Naive thymus-derived CD4-positive, alpha-beta T cell (primary cell): ENCODE measurements at regions of chr18 and their contacts with region 1.

Region 1: DNA sequence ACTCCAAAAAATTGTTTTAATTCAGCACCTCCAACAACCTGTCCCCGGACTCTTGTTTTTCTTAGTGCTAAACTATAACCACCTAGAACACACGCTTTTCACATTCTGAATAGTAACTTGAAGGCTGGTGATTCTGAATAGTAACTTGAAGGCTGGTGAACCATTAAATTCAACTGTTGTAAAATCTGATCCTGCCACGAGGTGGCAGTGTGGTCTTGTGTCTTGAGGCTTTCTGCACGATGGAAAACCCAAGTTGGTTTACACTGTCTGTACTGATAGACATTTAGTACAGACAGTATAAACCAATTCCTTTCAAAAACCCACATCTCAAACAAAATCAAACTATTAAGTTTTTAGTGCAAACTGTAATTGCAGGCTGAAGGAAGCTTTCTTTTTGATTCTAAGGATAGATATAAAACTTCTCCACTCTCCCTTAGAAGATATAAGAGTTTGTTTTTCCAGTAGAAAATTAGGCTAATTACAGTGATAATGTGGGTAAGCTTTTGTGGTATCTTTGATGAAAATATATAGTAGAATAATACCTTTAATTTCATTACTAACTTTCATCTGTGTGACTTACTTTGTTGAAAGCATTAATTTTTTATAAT is 57.6 kb downstream of the VAPA start:
- DNase-seq: peak; percentile 36 to 76 (median 62)
- ATAC-seq: peak; percentile 84
- H3K4me3 ChIP-seq: no peak overlapping the region
- H3K4me3 Mint-ChIP-seq: no peak overlapping the region
- H3K27ac ChIP-seq: no peak overlapping the region
- H3K27ac Mint-ChIP-seq: no peak overlapping the region
- H3K4me1 ChIP-seq: no peaks in the 10 kb centered on the region
- H3K4me1 Mint-ChIP-seq: peaks cover 4 to 28% (median 22%) of the 10 kb centered on the region in 7 donors
- H3K27me3 ChIP-seq: peaks cover 0 to 4% of the 10 kb centered on the region in 2 donors
- H3K27me3 Mint-ChIP-seq: peaks cover 34 to 39% (median 36%) of the 10 kb centered on the region in 5 donors

Region 2: DNA sequence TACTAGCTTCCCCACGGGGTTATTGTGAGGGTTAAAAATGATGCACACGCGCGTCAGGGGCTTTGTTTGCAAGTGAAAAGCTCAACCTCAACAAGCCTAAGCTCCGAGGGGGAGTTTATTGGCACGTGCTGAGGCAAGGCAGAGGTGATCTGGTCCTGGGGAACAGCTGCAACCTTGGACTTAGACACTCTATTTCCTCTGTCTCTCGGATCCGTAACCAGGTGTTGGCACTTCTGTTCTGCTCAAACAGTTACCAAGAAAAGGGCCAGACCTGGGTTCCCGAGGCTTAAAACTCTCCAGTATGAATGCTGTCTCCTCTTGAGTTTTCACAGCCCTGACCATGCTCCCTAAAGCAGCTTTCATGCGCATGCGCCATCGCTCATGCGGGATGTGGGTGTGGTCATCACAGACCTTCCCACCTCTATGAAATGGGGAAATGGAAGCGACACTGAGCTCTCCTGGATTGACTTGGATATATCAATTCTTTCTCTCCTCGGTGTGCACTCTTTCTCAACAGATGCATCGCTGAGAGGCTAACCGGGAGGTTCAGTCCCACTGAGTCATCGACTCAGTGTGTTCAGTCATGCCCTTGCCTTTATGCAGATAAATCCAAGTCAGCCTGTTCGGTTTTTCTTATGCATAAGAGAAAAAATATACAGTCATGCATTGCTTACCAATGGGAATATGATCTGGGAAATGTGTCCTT is 283.2 kb before region 1 on chr18:
- CTCF ChIA-PET with region 1: no interaction called
- POLR2A ChIA-PET with region 1: no interaction called
- intact Hi-C with region 1: no loop called
- DNase-seq: no peak
- ATAC-seq: no peak
- H3K4me3 ChIP-seq: no peak overlapping the region
- H3K4me3 Mint-ChIP-seq: no peak overlapping the region
- H3K27ac ChIP-seq: no peak overlapping the region
- H3K27ac Mint-ChIP-seq: no peak overlapping the region
- H3K4me1 ChIP-seq: no peaks in the 10 kb centered on the region
- H3K4me1 Mint-ChIP-seq: peaks cover 0 to 12% (median 7%) of the 10 kb centered on the region in 7 donors
- H3K27me3 ChIP-seq: no peaks in the 10 kb centered on the region
- H3K27me3 Mint-ChIP-seq: peaks cover 0 to 21% (median 4%) of the 10 kb centered on the region in 5 donors

Region 3: GRCh38 chr18:9831036-9831737 is 140.2 kb before region 1 on chr18:
- CTCF ChIA-PET with region 1: no interaction called
- POLR2A ChIA-PET with region 1: no interaction called
- intact Hi-C with region 1: no loop called
- DNase-seq: no peak
- ATAC-seq: no peak
- H3K4me3 ChIP-seq: no peak overlapping the region
- H3K4me3 Mint-ChIP-seq: no peak overlapping the region
- H3K27ac ChIP-seq: no peak overlapping the region
- H3K27ac Mint-ChIP-seq: no peak overlapping the region
- H3K4me1 ChIP-seq: no peaks in the 10 kb centered on the region
- H3K4me1 Mint-ChIP-seq: peaks cover 0 to 4% (median 0%) of the 10 kb centered on the region in 7 donors
- H3K27me3 ChIP-seq: no peaks in the 10 kb centered on the region
- H3K27me3 Mint-ChIP-seq: peaks cover 5 to 24% (median 14%) of the 10 kb centered on the region in 5 donors

Region 4: DNA sequence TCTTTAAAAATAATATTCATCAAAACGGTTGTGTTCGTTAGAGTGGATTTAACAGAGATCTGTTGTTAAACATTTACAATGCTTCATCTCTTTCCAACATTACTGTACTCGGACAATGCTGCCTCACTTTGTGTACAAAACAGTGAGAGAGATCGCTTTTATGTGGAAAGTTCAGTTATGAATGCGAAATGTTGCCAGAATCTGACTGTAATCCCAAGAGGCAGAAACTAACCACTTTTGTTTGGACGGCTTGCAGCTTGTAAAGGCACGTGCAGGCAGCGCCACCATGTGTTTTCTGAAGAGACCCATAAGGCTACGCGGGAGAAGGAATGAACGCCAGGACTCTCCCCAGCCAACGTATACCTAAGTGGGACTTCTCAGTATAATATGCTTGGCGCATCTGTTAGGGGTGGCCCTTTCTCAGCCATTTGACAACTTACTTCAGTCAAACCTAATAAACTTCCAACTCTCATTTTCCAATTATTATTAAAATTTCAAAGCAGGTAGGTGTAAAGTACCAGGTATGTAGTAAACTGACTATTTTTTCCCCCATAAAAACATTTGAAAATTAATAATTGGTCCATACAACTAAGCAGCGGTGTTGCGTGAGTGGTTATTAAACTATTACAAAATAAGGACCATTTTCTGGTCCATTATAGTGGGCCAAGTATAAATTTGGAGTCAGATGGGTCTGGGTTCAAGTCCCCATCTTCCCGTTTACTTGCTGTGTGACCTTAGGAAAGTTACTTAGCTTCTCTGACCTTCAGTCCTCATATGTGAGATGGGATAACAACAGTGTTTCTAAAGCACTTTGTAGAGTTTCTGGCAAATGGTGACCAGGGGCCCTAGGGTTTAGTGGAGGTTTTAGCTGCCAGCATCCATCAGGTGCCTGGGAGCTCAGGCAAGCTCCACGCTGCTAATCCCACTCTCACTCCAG is 548.9 kb after region 1 on chr18:
- CTCF ChIA-PET with region 1: interaction called, 25 read pairs
- POLR2A ChIA-PET with region 1: no interaction called
- intact Hi-C with region 1: loop called (anchors 1 kb)
- DNase-seq: peak; percentile 28 to 59 (median 47)
- ATAC-seq: peak; percentile 91
- H3K4me3 ChIP-seq: no peak overlapping the region
- H3K4me3 Mint-ChIP-seq: peak overlapping the region in 1 of 10 donors; percentile 16
- H3K27ac ChIP-seq: no peak overlapping the region
- H3K27ac Mint-ChIP-seq: no peak overlapping the region
- H3K4me1 ChIP-seq: peaks cover 0 to 2% of the 10 kb centered on the region in 2 donors
- H3K4me1 Mint-ChIP-seq: peaks cover 10 to 19% (median 14%) of the 10 kb centered on the region in 7 donors
- H3K27me3 ChIP-seq: peaks cover 0 to 3% of the 10 kb centered on the region in 2 donors
- H3K27me3 Mint-ChIP-seq: peaks cover 24 to 45% (median 28%) of the 10 kb centered on the region in 5 donors

Region 5: DNA sequence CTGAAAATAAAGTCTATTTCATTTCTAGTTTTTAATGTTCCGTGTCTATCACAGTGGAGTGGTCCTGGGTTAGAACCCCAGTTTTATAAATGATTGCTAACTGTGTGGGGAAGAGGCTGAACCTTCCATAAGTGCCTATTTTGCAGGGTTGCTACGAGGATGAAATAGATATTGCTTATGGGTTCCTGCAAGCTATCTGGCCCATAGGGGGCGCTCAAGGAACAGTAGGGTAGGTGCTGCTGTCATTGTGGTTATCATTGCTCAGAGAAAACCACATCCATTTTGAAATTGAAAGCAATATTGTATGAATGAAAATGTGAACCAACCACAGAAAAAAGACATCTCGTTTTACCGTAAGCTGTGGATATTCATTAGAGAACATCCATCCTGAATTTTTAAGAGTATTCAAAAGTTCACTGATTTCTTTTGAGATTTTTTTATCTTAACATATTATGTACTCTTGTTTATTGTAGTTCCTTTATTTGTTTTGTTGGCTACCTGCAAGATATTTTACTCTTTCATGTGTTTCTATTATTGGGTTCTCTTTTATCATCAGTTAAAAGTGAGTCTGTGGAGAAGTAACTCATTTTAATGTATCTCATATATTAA is 816.0 kb after region 1 on chr18:
- CTCF ChIA-PET with region 1: no interaction called
- POLR2A ChIA-PET with region 1: no interaction called
- intact Hi-C with region 1: loop called in 1 of 2 experiments (anchors 5 kb)
- DNase-seq: peak; percentile 54 to 85 (median 75)
- ATAC-seq: peak; percentile 96
- H3K4me3 ChIP-seq: no peak overlapping the region
- H3K4me3 Mint-ChIP-seq: peak overlapping the region in 4 of 10 donors; percentile 7 to 33 (median 14)
- H3K27ac ChIP-seq: no peak overlapping the region
- H3K27ac Mint-ChIP-seq: peak overlapping the region in 2 of 9 donors; percentile 25 to 64
- H3K4me1 ChIP-seq: no peaks in the 10 kb centered on the region
- H3K4me1 Mint-ChIP-seq: peaks cover 0 to 9% (median 5%) of the 10 kb centered on the region in 7 donors
- H3K27me3 ChIP-seq: no peaks in the 10 kb centered on the region
- H3K27me3 Mint-ChIP-seq: peaks cover 3 to 65% (median 27%) of the 10 kb centered on the region in 5 donors

Region 6: DNA sequence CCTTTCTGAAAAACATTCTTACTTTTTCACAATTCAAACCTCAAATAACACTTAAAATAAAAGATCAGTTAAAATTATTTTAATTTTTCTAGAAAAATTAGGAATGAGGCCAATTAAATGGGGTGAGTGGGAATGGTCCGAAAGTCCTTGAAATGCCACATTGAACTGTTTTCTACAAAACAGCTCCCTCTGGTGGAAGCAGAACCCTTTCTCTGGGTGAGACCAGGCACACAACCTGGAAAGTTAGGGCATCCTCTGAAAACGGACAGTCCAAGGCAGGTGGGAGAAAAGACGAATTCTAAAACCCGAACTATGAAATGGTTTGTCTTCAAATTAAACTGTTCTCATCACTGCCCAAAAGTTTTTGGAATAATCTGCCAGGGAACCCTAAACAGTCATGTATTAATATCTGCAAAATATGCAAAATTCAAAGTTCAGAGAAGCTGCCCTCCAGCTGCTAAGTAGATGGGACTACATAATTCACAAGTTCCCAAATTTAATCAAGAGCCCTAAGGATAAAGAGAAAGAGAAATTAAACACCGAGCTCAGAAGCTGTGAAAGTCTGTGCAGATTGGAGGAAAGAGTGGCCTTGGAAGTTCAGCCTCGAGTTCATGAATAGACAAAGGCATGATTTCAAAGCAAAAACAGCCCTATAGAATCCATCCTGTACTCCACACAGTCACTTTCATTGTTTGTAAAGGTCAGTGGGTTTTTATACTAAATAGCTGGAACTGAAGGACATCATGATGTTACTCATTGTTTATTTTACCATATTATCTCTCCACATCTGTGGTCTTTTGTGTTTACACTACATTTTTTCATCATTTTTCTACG is 1069.6 kb after region 1 on chr18:
- CTCF ChIA-PET with region 1: no interaction called
- POLR2A ChIA-PET with region 1: no interaction called
- intact Hi-C with region 1: loop called in 1 of 2 experiments (anchors 1 kb)
- DNase-seq: peak in 2 of 9 donors; percentile 5 to 8
- ATAC-seq: no peak
- H3K4me3 ChIP-seq: no peak overlapping the region
- H3K4me3 Mint-ChIP-seq: no peak overlapping the region
- H3K27ac ChIP-seq: no peak overlapping the region
- H3K27ac Mint-ChIP-seq: no peak overlapping the region
- H3K4me1 ChIP-seq: no peaks in the 10 kb centered on the region
- H3K4me1 Mint-ChIP-seq: no peaks in the 10 kb centered on the region
- H3K27me3 ChIP-seq: no peaks in the 10 kb centered on the region
- H3K27me3 Mint-ChIP-seq: peaks cover 5 to 15% (median 10%) of the 10 kb centered on the region in 5 donors

Region 7: DNA sequence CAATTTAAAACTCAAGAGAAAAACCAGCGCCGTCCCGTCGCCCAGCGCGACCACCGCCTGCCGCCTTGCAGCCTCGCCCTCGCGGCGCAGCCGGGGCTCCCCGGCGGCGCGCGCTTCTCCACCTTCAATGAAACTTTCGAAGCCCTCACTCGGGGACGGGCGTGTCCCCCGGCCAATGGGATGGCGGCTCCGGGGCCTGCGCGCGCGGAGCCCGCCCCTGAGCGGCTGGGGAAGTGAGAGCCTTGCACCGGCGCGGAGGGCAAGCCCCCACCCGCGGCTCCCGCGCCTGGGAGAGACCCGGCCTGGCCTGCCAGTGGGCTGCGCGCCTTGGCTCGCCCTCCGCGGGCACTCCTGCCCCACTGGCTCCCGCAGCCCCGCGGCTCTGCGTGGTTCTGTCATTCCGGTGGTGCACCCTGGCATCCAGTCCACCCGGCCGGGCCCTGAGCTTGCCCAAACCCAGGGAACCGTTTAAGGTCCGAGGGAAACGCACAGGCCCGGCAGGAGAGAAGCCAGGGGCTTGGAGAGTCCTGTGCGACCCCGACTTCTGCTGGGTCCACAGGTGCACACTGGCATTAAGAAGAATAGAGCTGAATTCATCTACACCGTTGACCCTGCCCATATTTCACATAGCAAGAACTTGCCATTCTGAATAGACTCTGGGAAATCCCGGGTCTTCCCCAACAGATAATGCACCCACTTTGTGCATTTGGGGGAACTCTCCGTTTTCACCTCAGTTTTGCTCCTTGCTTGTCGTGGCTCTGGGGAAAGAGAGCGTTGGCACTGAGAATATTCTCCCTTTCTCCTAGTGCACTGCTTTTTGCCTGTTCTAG is 1178.2 kb after region 1 on chr18 and contains the start of gene PIEZO2:
- CTCF ChIA-PET with region 1: no interaction called
- POLR2A ChIA-PET with region 1: no interaction called
- intact Hi-C with region 1: loop called in 1 of 2 experiments (anchors 5 kb)
- DNase-seq: no peak
- ATAC-seq: peak; percentile 63
- H3K4me3 ChIP-seq: no peak within 1 kb of the TSS
- H3K4me3 Mint-ChIP-seq: peak within 1 kb of the TSS in 2 of 10 donors; percentile 15 to 36
- H3K27ac ChIP-seq: no peak within 1 kb of the TSS
- H3K27ac Mint-ChIP-seq: no peak within 1 kb of the TSS
- H3K4me1 ChIP-seq: no peaks in the 10 kb centered on the region
- H3K4me1 Mint-ChIP-seq: peaks cover 0 to 9% (median 5%) of the 10 kb centered on the region in 7 donors
- H3K27me3 ChIP-seq: no peaks in the 10 kb centered on the region
- H3K27me3 Mint-ChIP-seq: peaks cover 32 to 54% (median 42%) of the 10 kb centered on the region in 5 donors
- total RNA-seq, gene PIEZO2: not detected

Region 8: DNA sequence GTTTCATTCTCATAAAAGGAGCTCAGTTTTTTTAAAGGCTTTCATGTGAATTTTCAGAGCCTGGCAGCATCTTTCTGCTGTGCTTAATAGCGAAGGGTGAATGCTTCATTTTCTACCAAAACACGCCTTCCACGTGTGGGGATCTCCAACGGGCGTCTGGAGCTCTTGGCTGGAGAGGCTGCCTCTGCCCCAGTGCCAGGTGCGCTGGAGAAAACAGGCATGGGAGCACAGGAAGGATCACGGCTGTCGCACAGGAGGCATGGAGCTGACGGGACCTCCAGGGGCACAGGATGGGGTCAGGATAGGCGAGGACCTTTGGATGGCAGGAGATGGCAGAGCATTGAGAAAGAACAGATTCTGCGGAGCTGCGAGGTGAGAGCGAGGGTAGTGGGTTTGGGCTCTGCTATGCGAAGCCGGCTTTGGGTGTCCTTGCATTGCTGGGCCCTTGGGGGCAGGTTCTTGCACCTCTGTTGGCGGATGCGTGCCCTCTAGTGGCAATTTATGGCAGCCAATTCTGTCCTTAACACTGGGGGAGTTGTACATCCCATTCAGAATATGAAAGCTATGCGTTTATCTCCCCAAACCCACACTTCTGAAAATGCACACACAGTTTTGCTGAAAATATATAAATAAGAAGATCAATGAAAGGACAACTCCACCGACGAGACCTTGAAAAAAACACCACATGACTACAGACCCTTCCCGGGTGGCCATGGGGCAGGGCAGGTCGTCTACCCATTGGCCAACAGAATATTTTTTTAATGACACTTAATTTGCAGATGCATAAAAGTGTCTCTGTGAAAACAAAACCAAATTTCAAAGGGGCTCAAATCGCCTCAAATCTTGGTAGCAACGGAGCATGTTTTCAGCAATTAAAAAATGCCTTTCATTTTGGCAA is 1547.6 kb after region 1 on chr18:
- CTCF ChIA-PET with region 1: no interaction called
- POLR2A ChIA-PET with region 1: no interaction called
- intact Hi-C with region 1: loop called in 1 of 2 experiments (anchors 10 kb)
- DNase-seq: peak in 2 of 9 donors; percentile 11 to 27
- ATAC-seq: no peak
- H3K4me3 ChIP-seq: no peak overlapping the region
- H3K4me3 Mint-ChIP-seq: no peak overlapping the region
- H3K27ac ChIP-seq: no peak overlapping the region
- H3K27ac Mint-ChIP-seq: no peak overlapping the region
- H3K4me1 ChIP-seq: no peaks in the 10 kb centered on the region
- H3K4me1 Mint-ChIP-seq: no peaks in the 10 kb centered on the region
- H3K27me3 ChIP-seq: no peaks in the 10 kb centered on the region
- H3K27me3 Mint-ChIP-seq: peaks cover 0 to 20% (median 9%) of the 10 kb centered on the region in 5 donors

Region 9: DNA sequence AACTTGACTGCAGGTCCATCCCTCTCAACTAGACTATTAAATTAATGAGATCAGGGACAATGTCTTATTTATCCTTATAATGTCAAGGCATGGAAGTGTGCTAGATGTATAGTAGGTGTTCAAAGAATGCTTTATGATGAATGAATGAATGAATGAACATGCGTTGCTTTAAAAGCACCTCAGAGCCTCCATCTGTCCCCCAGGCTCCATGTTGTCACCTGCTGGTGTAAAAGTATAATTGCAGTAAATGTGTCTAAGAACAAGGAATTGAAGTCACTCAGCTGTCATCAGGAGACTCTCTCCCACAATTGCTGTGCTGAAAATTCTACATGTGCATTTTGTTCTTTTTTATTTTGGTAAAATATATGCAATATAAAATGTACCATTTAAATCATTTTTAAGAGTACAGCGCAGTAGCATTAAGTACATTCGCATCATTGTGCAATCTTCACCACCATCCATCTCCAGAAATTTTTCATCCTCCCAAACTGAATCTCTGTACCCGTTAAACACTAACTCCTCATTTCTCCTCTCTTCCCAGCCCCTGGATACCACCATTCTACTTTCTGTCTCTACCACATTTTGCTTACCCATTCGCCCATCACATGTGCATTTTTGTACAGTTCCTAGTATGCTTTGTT is 1770.2 kb after region 1 on chr18:
- CTCF ChIA-PET with region 1: no interaction called
- POLR2A ChIA-PET with region 1: no interaction called
- intact Hi-C with region 1: loop called in 1 of 2 experiments (anchors 5 kb)
- DNase-seq: peak in 1 of 9 donors; percentile 12
- ATAC-seq: peak; percentile 49
- H3K4me3 ChIP-seq: no peak overlapping the region
- H3K4me3 Mint-ChIP-seq: no peak overlapping the region
- H3K27ac ChIP-seq: no peak overlapping the region
- H3K27ac Mint-ChIP-seq: no peak overlapping the region
- H3K4me1 ChIP-seq: no peaks in the 10 kb centered on the region
- H3K4me1 Mint-ChIP-seq: no peaks in the 10 kb centered on the region
- H3K27me3 ChIP-seq: no peaks in the 10 kb centered on the region
- H3K27me3 Mint-ChIP-seq: peaks cover 26 to 53% (median 30%) of the 10 kb centered on the region in 5 donors